Sigmoid colon (tissue), 7 donors: ENCODE measurements at regions of chr18 and their contacts with region 1.

Region 1: GRCh38 chr18:8982416-8983184 is 119.9 kb upstream of the NDUFV2 start:
- DNase-seq: no peak
- H3K4me3 ChIP-seq: no peak overlapping the region
- H3K27ac ChIP-seq: peak overlapping the region in 3 of 4 donors; percentile 78 to 88 (median 85)
- H3K4me1 ChIP-seq: peaks cover 0 to 85% (median 71%) of the 10 kb centered on the region in 4 donors
- H3K27me3 ChIP-seq: no peaks in the 10 kb centered on the region
- CTCF ChIP-seq: peak in 1 of 4 experiments; percentile 33
- EP300 ChIP-seq: no peak
- POLR2A ChIP-seq: no peak

Region 2: GRCh38 chr18:8754995-8755955 is 227.3 kb before region 1 on chr18:
- intact Hi-C with region 1: loop called (anchors 5 kb)
- DNase-seq: no peak
- H3K4me3 ChIP-seq: no peak overlapping the region
- H3K27ac ChIP-seq: peak overlapping the region in 3 of 4 donors; percentile 33 to 85 (median 43)
- H3K4me1 ChIP-seq: peaks cover 0 to 86% (median 68%) of the 10 kb centered on the region in 4 donors
- H3K27me3 ChIP-seq: no peaks in the 10 kb centered on the region
- CTCF ChIP-seq: no peak
- EP300 ChIP-seq: no peak
- POLR2A ChIP-seq: no peak

Region 3: DNA sequence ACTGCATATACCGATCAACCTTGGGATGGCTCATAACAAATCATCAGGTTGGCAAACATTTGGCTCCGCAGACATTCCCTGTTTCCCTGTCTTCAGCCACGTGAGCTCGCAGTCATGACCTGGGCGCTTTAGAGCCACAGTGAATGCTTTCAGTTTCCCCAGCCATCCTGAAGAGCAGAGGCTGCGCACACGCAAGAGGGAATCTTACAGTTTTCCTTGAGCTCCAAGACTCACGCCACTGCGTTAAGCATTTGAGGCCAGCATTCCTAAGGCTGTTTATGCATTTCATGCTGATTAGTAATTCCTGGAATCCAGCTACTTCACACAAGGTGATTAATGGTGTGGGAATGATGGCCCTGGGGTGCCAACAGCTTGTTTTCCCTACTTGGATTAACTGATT is 182.2 kb before region 1 on chr18:
- intact Hi-C with region 1: loop called (anchors 5 kb)
- DNase-seq: no peak
- H3K4me3 ChIP-seq: peak overlapping the region in 2 of 4 donors; percentile 6 to 16
- H3K27ac ChIP-seq: peak overlapping the region; percentile 80 to 93 (median 84)
- H3K4me1 ChIP-seq: peaks cover 0 to 68% (median 57%) of the 10 kb centered on the region in 4 donors
- H3K27me3 ChIP-seq: no peaks in the 10 kb centered on the region
- CTCF ChIP-seq: no peak
- EP300 ChIP-seq: peak in 1 of 4 donors; percentile 79
- POLR2A ChIP-seq: no peak

Region 4: DNA sequence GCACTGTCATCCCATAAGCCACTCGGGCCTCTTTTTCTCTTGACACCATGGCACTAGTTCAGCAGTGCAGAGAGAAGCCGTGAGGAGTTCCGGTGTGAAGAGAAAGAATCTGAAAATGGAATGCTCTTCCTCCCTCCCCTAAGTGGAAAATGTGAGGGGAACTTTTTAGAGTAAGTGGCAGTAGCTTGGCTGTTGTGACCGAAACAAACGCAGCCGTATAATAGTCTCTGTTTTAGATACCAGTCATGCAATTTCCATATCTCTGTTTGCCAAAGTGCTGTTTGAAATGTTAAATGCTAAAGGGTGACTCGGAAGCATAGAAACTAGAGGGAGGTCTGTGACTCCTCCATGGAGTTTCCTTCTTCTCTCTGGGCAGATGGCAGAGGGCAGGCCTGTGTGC is 154.3 kb before region 1 on chr18:
- intact Hi-C with region 1: loop called (anchors 5 kb)
- DNase-seq: no peak
- H3K4me3 ChIP-seq: no peak overlapping the region
- H3K27ac ChIP-seq: peak overlapping the region; percentile 61 to 68 (median 66)
- H3K4me1 ChIP-seq: peaks cover 0 to 29% (median 18%) of the 10 kb centered on the region in 4 donors
- H3K27me3 ChIP-seq: no peaks in the 10 kb centered on the region
- CTCF ChIP-seq: no peak
- EP300 ChIP-seq: no peak
- POLR2A ChIP-seq: no peak

Region 5: DNA sequence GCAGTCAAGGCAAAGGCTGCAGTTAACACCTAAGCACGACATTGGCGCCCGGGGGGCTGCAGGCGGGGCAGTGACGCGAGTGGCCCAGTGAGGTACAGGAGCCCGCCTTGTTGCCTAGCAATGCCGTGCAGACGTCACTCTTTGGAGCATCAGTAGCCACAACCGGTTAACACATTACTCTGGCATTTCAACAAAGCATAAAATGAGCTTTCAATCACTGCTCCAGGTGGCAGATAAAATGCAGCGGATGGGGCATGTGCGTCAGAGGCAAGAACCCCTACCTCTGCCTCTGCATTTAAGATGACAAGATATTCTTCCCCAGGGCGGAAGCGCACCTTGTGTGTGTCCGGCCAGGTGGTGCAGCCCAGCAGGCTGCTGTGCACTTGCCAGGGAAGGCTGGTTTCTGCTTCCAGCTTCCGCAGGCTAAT is 137.9 kb before region 1 on chr18:
- intact Hi-C with region 1: loop called (anchors 5 kb)
- DNase-seq: no peak
- H3K4me3 ChIP-seq: no peak overlapping the region
- H3K27ac ChIP-seq: no peak overlapping the region
- H3K4me1 ChIP-seq: peaks cover 0 to 36% (median 20%) of the 10 kb centered on the region in 4 donors
- H3K27me3 ChIP-seq: no peaks in the 10 kb centered on the region
- CTCF ChIP-seq: no peak
- EP300 ChIP-seq: no peak
- POLR2A ChIP-seq: no peak

Region 6: DNA sequence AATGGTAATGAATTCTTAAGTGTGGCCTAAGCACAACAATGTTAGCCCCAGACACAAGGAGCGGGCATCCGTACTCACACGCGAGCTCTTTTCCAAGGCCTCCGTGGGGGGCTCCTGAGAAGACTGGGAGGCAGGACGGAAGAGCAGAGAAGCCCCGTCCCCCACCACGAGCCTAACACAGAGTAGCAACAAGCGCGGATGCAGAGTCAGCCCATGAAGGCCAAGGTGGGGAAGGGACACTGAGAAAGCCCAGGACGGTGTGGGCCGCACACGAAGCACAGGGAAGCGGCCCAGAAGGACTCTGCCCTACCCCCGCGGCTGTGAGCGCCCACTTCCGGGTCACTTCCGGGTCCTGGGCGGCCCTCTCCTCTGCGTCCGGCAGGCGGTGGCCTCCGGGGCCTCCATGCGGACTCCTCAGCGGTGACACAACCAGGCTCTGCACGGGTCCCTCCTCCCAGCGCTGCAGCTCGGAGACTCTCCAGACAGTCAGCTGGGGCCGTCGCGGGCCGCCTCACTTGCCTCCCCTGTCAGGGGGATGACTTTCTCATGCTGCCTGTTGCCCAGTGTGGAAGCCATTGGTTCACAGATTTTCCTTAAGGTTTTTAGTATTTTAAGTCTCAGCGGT is 125.7 kb before region 1 on chr18:
- intact Hi-C with region 1: no loop called
- DNase-seq: no peak
- H3K4me3 ChIP-seq: no peak overlapping the region
- H3K27ac ChIP-seq: no peak overlapping the region
- H3K4me1 ChIP-seq: peaks cover 0 to 12% (median 5%) of the 10 kb centered on the region in 4 donors
- H3K27me3 ChIP-seq: no peaks in the 10 kb centered on the region
- CTCF ChIP-seq: no peak
- EP300 ChIP-seq: no peak
- POLR2A ChIP-seq: no peak